Naive thymus-derived CD4-positive, alpha-beta T cell (primary cell): ENCODE measurements at regions of chrX and their contacts with region 1.

Region 1: DNA sequence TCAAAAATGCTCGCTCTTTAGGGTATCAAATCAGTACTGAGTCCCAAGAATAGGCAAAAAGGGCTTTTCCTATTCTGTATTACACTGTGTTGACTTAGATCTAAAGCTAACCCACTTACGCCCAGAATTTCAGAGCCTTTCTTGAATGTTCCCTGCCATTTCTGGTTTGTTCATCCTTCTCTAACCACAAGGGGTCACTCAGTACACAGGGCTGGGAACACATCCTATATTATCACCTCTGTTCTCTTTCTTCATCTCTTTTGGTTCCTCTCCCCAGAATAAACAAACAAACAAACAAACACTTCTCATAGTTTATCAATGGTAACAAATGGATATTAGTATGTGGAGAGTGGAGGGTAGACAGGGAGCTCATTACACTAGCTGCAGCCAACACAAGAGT is 25.5 kb upstream of the MORC4 start:
- DNase-seq: peak in 5 of 9 donors; percentile 0 to 23 (median 3)
- ATAC-seq: no peak
- H3K4me3 ChIP-seq: no peak overlapping the region
- H3K4me3 Mint-ChIP-seq: no peak overlapping the region
- H3K27ac ChIP-seq: no peak overlapping the region
- H3K27ac Mint-ChIP-seq: no peak overlapping the region
- H3K4me1 ChIP-seq: no peaks in the 10 kb centered on the region
- H3K4me1 Mint-ChIP-seq: peaks cover 0 to 1% (median 0%) of the 10 kb centered on the region in 7 donors
- H3K27me3 ChIP-seq: no peaks in the 10 kb centered on the region
- H3K27me3 Mint-ChIP-seq: peaks cover 0 to 4% (median 0%) of the 10 kb centered on the region in 5 donors

Region 2: DNA sequence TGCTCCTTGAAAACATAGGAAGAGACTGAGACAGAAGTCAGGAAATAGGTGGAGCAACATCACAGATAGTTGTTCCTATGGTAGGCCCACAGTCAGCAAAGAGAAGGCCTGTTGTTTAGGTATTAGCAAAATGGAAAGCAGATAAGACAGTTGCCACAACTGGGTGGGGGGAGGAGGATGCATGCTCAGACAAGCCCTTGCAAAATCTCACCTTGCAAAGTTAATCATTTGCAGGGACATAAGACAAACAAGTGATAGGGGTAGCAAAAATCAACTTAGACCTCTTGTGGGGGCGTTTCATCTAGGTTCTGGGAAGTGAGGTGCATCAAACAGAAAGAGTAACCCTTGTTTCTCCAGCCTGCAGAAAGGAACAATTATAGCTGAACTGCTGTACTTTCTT is 1017.7 kb before region 1 on chrX:
- CTCF ChIA-PET with region 1: no interaction called
- POLR2A ChIA-PET with region 1: no interaction called
- intact Hi-C with region 1: no loop called
- DNase-seq: no peak
- ATAC-seq: no peak
- H3K4me3 ChIP-seq: no peak overlapping the region
- H3K4me3 Mint-ChIP-seq: no peak overlapping the region
- H3K27ac ChIP-seq: no peak overlapping the region
- H3K27ac Mint-ChIP-seq: no peak overlapping the region
- H3K4me1 ChIP-seq: no peaks in the 10 kb centered on the region
- H3K4me1 Mint-ChIP-seq: no peaks in the 10 kb centered on the region
- H3K27me3 ChIP-seq: no peaks in the 10 kb centered on the region
- H3K27me3 Mint-ChIP-seq: no peaks in the 10 kb centered on the region

Region 3: DNA sequence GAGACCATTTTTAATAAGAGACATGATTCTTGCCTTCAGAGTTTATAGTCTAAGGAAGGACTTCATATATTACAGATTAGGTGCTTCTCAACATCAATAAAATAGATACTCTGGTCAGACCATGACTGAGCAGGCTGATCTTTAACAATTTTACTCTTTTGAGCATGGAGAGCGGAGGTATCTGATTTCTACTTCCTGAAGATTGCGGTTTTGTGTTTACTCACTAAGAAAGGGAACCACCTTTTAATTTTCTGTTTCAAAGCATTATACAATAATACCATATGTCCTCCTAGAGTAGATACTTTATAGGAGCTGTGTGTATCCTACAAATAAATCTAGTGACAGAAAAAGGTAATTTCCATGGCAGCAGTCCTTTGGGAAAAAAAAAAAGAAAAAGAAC is 38.1 kb before region 1 on chrX:
- CTCF ChIA-PET with region 1: no interaction called
- POLR2A ChIA-PET with region 1: no interaction called
- intact Hi-C with region 1: no loop called
- DNase-seq: peak in 2 of 9 donors; percentile 8 to 9
- ATAC-seq: peak; percentile 22
- H3K4me3 ChIP-seq: no peak overlapping the region
- H3K4me3 Mint-ChIP-seq: peak overlapping the region in 5 of 10 donors; percentile 16 to 61 (median 41)
- H3K27ac ChIP-seq: no peak overlapping the region
- H3K27ac Mint-ChIP-seq: peak overlapping the region in 1 of 9 donors; percentile 22
- H3K4me1 ChIP-seq: peaks cover 0 to 15% of the 10 kb centered on the region in 2 donors
- H3K4me1 Mint-ChIP-seq: peaks cover 0 to 25% (median 14%) of the 10 kb centered on the region in 7 donors
- H3K27me3 ChIP-seq: no peaks in the 10 kb centered on the region
- H3K27me3 Mint-ChIP-seq: no peaks in the 10 kb centered on the region

Region 4: GRCh38 chrX:107102975-107103374 is 77.4 kb after region 1 on chrX:
- CTCF ChIA-PET with region 1: no interaction called
- POLR2A ChIA-PET with region 1: no interaction called
- intact Hi-C with region 1: no loop called
- DNase-seq: no peak
- ATAC-seq: no peak
- H3K4me3 ChIP-seq: no peak overlapping the region
- H3K4me3 Mint-ChIP-seq: no peak overlapping the region
- H3K27ac ChIP-seq: no peak overlapping the region
- H3K27ac Mint-ChIP-seq: no peak overlapping the region
- H3K4me1 ChIP-seq: no peaks in the 10 kb centered on the region
- H3K4me1 Mint-ChIP-seq: peaks cover 4 to 27% (median 14%) of the 10 kb centered on the region in 7 donors
- H3K27me3 ChIP-seq: no peaks in the 10 kb centered on the region
- H3K27me3 Mint-ChIP-seq: no peaks in the 10 kb centered on the region

Region 5: DNA sequence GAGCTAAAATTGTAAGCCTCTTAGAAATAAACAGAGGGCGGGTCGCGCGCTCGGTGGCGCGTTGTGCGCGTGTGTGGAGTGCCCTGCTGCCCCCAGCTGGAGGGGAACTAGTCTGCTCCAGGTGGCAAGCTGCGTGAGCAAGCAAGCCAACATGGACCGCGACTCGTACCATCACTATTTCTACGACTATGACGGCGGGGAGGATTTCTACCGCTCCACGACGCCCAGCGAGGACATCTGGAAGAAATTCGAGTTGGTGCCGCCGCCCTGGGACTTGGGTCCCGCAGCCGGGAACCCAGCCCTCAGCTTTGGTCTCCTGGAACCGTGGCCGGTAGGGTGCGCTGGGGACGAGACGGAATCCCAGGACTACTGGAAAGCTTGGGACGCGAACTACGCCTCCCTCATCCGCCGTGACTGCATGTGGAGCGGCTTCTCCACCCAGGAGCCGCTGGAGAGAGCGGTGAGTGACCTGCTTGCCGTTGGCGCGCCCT is 246.9 kb after region 1 on chrX:
- CTCF ChIA-PET with region 1: no interaction called
- POLR2A ChIA-PET with region 1: no interaction called
- intact Hi-C with region 1: loop called in 1 of 2 experiments (anchors 1 kb)
- DNase-seq: peak in 3 of 9 donors; percentile 5 to 18 (median 11)
- ATAC-seq: no peak
- H3K4me3 ChIP-seq: no peak overlapping the region
- H3K4me3 Mint-ChIP-seq: peak overlapping the region in 6 of 10 donors; percentile 27 to 74 (median 58)
- H3K27ac ChIP-seq: no peak overlapping the region
- H3K27ac Mint-ChIP-seq: no peak overlapping the region
- H3K4me1 ChIP-seq: no peaks in the 10 kb centered on the region
- H3K4me1 Mint-ChIP-seq: peaks cover 0 to 10% (median 4%) of the 10 kb centered on the region in 7 donors
- H3K27me3 ChIP-seq: no peaks in the 10 kb centered on the region
- H3K27me3 Mint-ChIP-seq: peaks cover 7 to 25% (median 13%) of the 10 kb centered on the region in 5 donors

Region 6: GRCh38 chrX:107324499-107325320 is 299.2 kb after region 1 on chrX:
- CTCF ChIA-PET with region 1: no interaction called
- POLR2A ChIA-PET with region 1: no interaction called
- intact Hi-C with region 1: loop called in 1 of 2 experiments (anchors 10 kb)
- DNase-seq: peak in 1 of 9 donors; percentile 19
- ATAC-seq: peak; percentile 16
- H3K4me3 ChIP-seq: no peak overlapping the region
- H3K4me3 Mint-ChIP-seq: no peak overlapping the region
- H3K27ac ChIP-seq: no peak overlapping the region
- H3K27ac Mint-ChIP-seq: no peak overlapping the region
- H3K4me1 ChIP-seq: no peaks in the 10 kb centered on the region
- H3K4me1 Mint-ChIP-seq: no peaks in the 10 kb centered on the region
- H3K27me3 ChIP-seq: no peaks in the 10 kb centered on the region
- H3K27me3 Mint-ChIP-seq: peaks cover 0 to 13% (median 2%) of the 10 kb centered on the region in 5 donors